HEK293T (cell line): ENCODE measurements at regions of chr12 and their contacts with region 1.

Region 1: GRCh38 chr12:47837190-47838171 is 17.8 kb upstream of the HDAC7 start:
- DNase-seq: peak; percentile 76

Region 2: GRCh38 chr12:47698055-47698454 is 139.4 kb before region 1 on chr12:
- CTCF ChIA-PET with region 1: no interaction called
- POLR2A ChIA-PET with region 1: no interaction called
- DNase-seq: no peak

Region 3: DNA sequence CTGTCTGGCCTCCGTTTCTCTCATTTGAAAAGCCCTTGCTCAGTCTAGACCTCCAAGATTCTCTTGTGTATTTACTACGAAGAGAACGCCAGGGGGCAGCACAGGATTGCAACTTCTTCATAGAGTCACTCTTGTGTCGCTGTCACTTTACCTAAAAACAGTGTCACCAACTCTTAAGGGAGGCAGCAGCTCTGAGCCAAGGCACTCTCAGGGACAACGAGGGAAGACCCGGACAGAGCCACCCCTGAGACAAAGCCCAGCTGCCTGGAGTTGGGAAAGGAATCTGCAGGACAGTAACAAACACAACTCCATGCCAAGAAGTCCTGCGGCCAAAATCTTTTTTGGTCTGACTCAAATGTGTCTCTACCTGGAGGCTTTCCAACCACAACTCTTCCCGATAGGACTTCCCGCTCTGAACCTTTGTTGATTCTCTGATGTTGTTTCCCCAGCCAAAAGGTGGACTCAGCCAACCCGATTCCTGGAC is 122.0 kb before region 1 on chr12:
- CTCF ChIA-PET with region 1: interaction called, 24 read pairs
- POLR2A ChIA-PET with region 1: interaction called, 3 read pairs
- DNase-seq: peak; percentile 71

Region 4: GRCh38 chr12:47767216-47767724 is 70.2 kb before region 1 on chr12:
- CTCF ChIA-PET with region 1: interaction called, 18 read pairs
- POLR2A ChIA-PET with region 1: interaction called, 8 read pairs
- DNase-seq: peak; percentile 56

Region 5: DNA sequence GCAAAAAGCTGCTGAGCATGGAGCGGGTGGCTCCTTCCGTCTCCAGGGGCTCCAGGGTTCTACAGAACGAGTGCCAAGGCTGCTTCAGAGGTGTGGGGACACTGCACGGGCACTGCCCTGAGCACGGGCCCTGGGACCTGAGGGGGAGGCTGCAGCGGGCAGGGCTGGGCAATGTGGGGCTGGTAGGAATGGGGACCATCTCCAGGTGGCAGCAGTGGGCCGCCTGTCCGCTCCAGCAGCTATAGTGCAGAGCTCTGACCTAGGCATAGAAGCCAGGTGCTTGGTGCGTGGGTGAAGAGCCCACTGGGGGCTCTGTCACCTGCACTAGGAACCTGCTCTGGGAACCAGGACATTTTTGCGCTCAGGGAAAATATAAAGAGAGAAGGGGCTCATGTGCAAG is 40.0 kb before region 1 on chr12:
- CTCF ChIA-PET with region 1: interaction called, 20 read pairs
- POLR2A ChIA-PET with region 1: interaction called, 5 read pairs
- DNase-seq: peak; percentile 36

Region 6: GRCh38 chr12:47819896-47820630 is 17.4 kb before region 1 on chr12 and contains the start of gene HDAC7:
- CTCF ChIA-PET with region 1: interaction called, 7 read pairs
- POLR2A ChIA-PET with region 1: interaction called, 11 read pairs
- DNase-seq: peak; percentile 82